GM10248 (cell line): ENCODE measurements at regions of chr2 and their contacts with region 1.

Region 1: GRCh38 chr2:212968280-212968679 is 183.1 kb downstream of the IKZF2 start:
- DNase-seq: no peak
- CTCF ChIP-seq: no peak

Region 2: GRCh38 chr2:212264187-212264586 is 704.1 kb before region 1 on chr2:
- CTCF ChIA-PET with region 1: no interaction called
- POLR2A ChIA-PET with region 1: no interaction called
- DNase-seq: no peak
- CTCF ChIP-seq: no peak

Region 3: DNA sequence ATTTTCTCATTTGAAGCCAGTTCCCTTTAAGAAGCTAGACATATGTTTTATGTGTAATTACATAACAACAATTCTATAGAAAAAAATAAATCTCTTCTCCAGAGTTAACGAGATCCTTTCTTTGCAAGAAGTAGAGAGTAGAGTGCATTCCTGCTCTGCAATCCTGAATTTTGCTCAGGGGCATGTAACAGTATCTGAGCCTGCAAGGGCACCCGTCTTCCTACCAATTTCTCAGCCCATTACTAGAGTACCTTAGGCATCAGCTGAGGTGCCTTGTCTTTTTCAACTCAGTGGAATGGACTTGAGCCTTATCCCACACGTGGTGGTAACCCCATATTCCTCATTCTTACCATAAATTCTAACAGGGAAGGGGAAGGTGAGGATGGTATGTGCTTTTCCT is 22.8 kb before region 1 on chr2:
- CTCF ChIA-PET with region 1: interaction called, 10 read pairs
- POLR2A ChIA-PET with region 1: no interaction called
- DNase-seq: no peak
- CTCF ChIP-seq: no peak

Region 4: GRCh38 chr2:212979799-212980198 is 11.5 kb after region 1 on chr2:
- CTCF ChIA-PET with region 1: interaction called, 11 read pairs
- POLR2A ChIA-PET with region 1: no interaction called
- DNase-seq: no peak
- CTCF ChIP-seq: no peak